Sciatic nerve (tissue), 2 donors: ENCODE measurements at regions of chr20 and their contacts with region 1.

Region 1: DNA sequence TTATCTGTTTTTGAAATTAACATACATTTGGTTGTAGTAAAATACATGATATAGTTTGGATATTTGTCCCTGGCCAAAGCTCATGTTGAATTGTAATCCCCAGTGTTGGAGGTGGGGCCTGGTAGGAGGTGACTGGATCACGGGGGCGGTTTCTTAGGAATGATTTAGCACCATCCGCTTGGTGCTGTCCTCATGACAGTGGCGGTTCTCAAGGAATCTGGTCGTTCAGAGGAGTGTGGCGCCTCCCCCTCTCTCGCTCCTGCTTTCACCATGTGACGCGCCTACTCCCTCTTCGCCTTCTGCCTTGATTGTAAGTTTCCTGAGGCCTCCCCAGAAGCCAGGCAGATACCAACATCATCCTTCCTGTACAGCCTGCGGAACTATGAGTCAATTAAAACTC is 29.0 kb downstream of the CTCFL start:
- DNase-seq: no peak
- ATAC-seq: no peak

Region 2: GRCh38 chr20:57380081-57380881 is 115.7 kb before region 1 on chr20:
- intact Hi-C with region 1: loop called (anchors 2 kb)
- DNase-seq: no peak
- ATAC-seq: no peak

Region 3: DNA sequence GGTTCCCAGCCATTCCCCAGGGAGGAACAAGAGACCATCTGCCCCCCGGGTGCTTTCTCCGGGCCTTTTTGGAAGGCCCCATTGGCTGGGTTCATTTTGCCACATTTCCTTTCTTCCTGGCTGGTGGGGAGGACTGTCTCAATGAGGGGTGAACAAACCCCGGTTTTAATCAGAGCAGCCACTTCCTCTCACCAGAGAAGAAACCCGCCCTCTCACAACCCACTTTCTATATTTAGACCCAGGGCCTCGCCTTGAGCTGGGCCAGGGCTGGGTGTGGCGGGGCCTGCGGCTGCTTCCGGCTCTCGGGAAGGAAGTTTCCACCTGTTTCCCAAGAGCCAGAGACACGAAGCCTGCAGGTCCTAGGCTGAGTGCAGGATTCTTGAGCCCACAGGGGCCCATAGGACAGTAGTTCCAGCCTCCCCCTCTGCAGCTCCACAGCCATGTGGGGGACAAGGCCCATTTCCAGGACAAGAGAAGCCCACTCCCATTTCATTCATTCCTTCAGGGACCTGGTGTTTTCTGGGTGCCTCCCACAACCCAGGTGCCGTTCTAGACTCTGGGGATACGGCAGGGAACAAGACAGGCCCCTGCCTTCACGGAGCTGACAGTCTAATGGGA is 63.0 kb before region 1 on chr20:
- intact Hi-C with region 1: no loop called
- DNase-seq: no peak
- ATAC-seq: peak; percentile 42